Activated T-helper 1 cell treated with anti-CD3 and anti-CD28 coated beads, Interleukin-12 subunit alpha, Interleukin-12 subunit beta, Interleukin-2, Interleukin-4 antibody, amounts not matched to agents 30 ng/mL and 10 ng/mL and 1 ng/mL, durations not matched to agents 14 hours and 24 hours and 36 hours (primary cell): ENCODE measurements at regions of chr1 and their contacts with region 1.

Region 1: DNA sequence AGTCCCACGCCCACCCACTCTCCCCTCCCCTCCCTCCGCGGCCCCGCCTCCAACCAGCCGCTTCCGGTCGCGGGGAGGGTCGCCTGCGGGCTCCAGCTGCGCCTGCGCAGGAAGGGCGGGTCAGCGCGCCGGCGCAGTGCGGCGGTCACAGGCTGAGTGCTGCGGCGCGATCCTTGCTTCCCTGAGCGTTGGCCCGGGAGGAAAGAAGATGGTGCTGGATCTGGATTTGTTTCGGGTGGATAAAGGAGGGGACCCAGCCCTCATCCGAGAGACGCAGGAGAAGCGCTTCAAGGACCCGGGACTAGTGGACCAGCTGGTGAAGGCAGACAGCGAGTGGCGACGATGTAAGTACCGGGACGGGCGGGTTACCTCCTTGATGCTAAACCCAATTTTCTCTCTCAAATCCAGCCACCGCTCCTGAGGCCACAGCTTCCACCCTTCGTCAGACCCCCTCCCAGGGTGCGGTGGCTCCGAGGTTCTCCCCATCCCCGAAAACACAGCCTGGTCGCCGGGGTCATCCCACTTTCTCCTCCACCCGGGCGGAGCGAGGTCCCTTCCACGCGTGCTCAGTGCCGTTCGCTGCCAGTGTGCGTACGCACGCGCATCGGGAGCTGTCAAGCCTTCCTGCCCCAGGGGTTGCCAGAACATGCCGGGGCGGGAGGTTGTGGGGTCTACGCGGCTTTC is at the start of gene SARS1:
- DNase-seq: peak; percentile 88
- H3K4me3 Mint-ChIP-seq: peak within 1 kb of the TSS; percentile 94
- H3K27ac Mint-ChIP-seq: peak within 1 kb of the TSS; percentile 94
- H3K4me1 Mint-ChIP-seq: peaks cover 37% of the 10 kb centered on the region
- H3K27me3 Mint-ChIP-seq: peaks cover 3% of the 10 kb centered on the region
- total RNA-seq, gene SARS1: 147 and 154 TPM in 2 replicates

Region 2: DNA sequence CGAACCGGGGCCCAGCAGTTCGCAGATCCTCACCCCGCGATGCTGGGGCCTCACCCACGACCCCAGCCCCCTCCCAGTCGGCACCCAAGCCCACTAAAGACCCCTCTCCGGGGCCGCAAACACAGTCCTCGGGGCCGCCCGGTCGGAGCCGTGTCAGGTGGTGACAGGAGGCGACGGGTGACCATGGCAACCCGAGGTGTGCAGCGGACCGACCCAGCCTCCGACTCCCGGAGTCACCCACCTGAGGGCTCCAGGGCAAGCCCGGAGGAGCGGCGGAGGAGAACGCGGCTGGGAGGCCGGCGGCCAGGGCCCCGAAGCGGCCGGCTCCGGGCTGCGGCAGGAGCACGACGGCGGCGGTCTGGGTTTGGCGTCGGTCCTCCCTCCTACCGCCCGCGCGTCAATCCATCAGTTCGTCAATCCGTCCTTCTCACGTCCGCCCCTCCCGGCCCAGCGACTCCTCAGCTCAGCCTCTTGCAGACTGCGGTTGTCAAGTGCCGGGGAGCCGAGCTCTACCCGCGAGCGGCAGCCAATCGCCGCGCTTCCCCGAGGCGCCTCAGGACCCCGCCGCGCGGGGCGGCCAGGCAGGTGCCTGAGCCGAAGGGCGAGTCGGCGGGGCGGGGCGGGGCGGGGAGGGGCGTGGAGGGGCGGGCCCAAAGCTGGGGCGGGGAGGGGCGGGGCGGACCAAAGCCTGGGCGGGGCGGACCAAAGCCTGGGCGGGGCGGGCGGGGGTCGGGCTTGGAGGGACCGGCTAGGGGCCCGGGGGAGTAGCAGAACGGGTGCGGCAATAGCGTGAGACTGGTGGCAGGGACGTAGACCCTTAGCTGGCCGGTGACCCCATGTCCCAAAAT is 172.1 kb before region 1 on chr1 and contains the start of gene WDR47:
- intact Hi-C with region 1: loop called (anchors 1 kb)
- DNase-seq: peak; percentile 96
- H3K4me3 Mint-ChIP-seq: peak within 1 kb of the TSS; percentile 91
- H3K27ac Mint-ChIP-seq: peak within 1 kb of the TSS; percentile 92
- H3K4me1 Mint-ChIP-seq: peaks cover 11% of the 10 kb centered on the region
- H3K27me3 Mint-ChIP-seq: no peaks in the 10 kb centered on the region
- total RNA-seq, gene WDR47: 11.5 and 14.4 TPM in 2 replicates

Region 3: DNA sequence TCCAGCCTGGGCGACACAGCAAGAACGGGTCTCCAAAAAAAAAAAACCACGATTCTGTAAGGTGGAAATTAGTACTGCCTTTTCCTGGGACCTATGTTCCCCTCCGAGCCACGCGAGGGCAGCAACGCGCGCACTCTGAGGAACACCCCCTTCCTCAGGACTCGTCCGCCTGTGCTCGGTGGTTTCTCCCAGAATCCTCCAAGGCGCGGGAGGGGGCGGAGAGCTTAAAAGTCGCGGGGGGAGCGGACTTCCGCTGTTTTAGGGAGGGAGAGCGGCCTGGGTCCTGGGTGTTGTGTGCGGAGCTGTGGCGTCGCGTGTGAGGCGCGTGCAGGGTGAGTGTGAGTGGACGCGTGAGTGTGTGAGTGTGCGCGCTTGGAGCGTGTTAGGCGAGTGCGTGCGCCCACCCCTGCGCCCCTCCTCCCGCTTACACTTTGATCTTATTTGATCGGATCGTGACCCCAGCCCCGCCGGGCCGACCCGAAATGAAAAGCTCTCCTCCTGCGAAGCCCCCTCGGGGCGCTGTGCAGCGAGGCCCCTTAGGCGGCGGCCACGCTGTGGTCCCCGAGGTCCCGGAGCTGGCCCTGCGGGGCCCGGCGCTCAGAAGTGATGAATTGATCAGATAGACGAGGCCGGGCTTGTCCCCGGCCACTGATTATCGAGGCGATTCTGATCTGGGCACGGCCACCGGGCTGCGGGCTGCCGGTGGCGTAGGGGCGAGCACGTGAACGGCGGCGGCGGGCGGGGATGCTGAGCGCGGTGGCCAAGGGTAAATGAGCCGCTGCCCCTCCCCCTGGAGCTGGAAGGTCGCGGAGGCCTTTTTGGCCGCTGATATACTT is 113.8 kb before region 1 on chr1:
- intact Hi-C with region 1: loop called (anchors 1 kb)
- DNase-seq: peak; percentile 95
- H3K4me3 Mint-ChIP-seq: peak overlapping the region; percentile 97
- H3K27ac Mint-ChIP-seq: peak overlapping the region; percentile 98
- H3K4me1 Mint-ChIP-seq: peaks cover 10% of the 10 kb centered on the region
- H3K27me3 Mint-ChIP-seq: no peaks in the 10 kb centered on the region

Region 4: GRCh38 chr1:109201123-109201703 is 12.7 kb before region 1 on chr1:
- intact Hi-C with region 1: loop called (anchors 1 kb)
- DNase-seq: no peak
- H3K4me3 Mint-ChIP-seq: no peak overlapping the region
- H3K27ac Mint-ChIP-seq: peak overlapping the region; percentile 26
- H3K4me1 Mint-ChIP-seq: peaks cover 38% of the 10 kb centered on the region
- H3K27me3 Mint-ChIP-seq: peaks cover 2% of the 10 kb centered on the region

Region 5: DNA sequence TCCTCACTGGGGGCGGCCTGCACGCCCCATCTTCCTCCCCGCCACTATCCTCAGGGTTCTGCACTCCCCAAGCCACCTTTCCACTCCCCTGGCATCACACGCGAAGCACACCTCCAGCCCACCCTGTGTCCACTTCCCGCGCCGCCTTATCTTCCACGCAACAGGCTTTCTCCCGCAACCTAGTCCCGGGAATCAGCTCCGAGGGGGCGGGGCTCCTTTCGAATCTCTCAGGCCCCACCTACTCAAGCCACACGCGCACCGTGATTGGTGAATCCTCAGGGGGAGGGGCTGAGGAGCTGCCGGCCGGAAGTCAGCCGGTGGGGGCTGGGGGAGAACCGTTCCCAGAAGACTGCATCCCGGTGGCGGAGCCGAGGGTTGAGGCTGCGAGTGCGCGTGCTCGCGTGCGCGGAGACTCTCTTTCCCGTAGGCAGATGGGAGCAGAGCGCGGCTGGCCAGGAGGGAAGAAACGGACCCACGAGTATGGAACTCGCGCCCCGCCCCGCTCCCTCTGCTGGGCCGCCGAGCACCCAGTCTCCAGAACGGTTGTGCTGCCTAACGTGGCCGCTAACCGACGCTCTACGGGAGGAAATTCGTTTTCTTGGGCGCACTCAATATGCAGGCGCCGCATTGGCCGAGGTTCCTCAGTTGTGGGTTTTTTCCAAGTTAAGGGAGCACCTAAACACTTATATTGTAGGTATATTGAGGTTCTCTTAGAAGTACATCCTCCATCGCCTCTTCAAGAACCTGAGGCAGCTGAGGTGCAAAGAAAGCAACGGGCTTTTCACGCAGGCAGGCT is 69.2 kb after region 1 on chr1 and contains the start of gene PSRC1:
- intact Hi-C with region 1: loop called (anchors 2 kb)
- DNase-seq: peak; percentile 89
- H3K4me3 Mint-ChIP-seq: peak within 1 kb of the TSS; percentile 97
- H3K27ac Mint-ChIP-seq: peak within 1 kb of the TSS; percentile 81
- H3K4me1 Mint-ChIP-seq: peaks cover 35% of the 10 kb centered on the region
- H3K27me3 Mint-ChIP-seq: peaks cover 3% of the 10 kb centered on the region
- total RNA-seq, gene PSRC1: 3.6 and 5.5 TPM in 2 replicates

Region 6: GRCh38 chr1:109361649-109362048 is 147.7 kb after region 1 on chr1:
- intact Hi-C with region 1: no loop called
- DNase-seq: no peak
- H3K4me3 Mint-ChIP-seq: no peak overlapping the region
- H3K27ac Mint-ChIP-seq: no peak overlapping the region
- H3K4me1 Mint-ChIP-seq: no peaks in the 10 kb centered on the region
- H3K27me3 Mint-ChIP-seq: peaks cover 33% of the 10 kb centered on the region